HepG2 (cell line): ENCODE measurements at regions of chr3 and their contacts with region 1.

Region 1: DNA sequence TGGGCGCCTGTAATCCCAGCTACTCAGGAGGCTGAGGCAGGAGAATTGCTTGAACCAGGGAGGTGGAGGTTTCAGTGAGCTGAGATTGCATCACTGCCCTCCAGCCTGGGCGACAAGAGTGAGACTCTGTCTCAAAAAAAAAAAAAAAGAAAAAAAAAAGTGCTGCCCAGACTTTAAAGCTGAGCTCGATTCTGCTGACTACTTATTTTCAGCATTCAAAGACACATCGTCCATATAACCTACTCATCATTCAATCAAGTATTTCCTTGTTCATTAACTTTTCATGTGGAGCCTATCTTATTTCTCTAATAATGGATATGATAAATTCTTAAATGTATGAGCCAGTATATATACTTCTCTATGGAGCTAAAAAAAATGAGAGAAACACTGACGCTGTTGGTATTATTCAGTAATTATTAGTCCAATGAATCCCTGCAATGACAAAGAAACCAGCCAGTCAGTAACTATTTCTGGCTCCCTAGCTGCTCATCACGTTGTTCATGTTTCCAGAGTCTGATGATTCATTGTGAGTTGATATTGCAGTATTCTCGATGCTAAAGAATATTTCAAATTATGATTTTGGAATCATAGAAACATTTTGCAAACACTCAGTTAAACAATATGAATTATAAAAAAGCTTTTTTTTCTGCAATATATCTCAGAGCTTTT is 111.9 kb downstream of the RAP2B start:
- DNase-seq: no peak
- ATAC-seq: no peak
- H3K4me3 ChIP-seq: no peak overlapping the region
- H3K27ac ChIP-seq: no peak overlapping the region
- H3K4me1 ChIP-seq: no peaks in the 10 kb centered on the region
- H3K27me3 ChIP-seq: no peaks in the 10 kb centered on the region; a peak in 2 of 5 replicates
- CTCF ChIP-seq: no peak
- EP300 ChIP-seq: no peak
- POLR2A ChIP-seq: no peak
- RAD21 ChIP-seq: no peak

Region 2: GRCh38 chr3:154507727-154508126 is 1233.8 kb after region 1 on chr3:
- CTCF ChIA-PET with region 1: no interaction called
- POLR2A ChIA-PET with region 1: no interaction called
- in situ Hi-C with region 1: no loop called
- intact Hi-C with region 1: loop called (anchors 5 kb)
- DNase-seq: no peak
- ATAC-seq: no peak
- H3K4me3 ChIP-seq: no peak overlapping the region
- H3K27ac ChIP-seq: no peak overlapping the region
- H3K4me1 ChIP-seq: no peaks in the 10 kb centered on the region
- H3K27me3 ChIP-seq: no peaks in the 10 kb centered on the region
- CTCF ChIP-seq: no peak
- EP300 ChIP-seq: no peak
- POLR2A ChIP-seq: no peak
- RAD21 ChIP-seq: no peak